Activated B cell treated with CpG ODN at 0.5 μM for 24 hours (primary cell): ENCODE measurements at regions of chr14 and their contacts with region 1.

Region 1: DNA sequence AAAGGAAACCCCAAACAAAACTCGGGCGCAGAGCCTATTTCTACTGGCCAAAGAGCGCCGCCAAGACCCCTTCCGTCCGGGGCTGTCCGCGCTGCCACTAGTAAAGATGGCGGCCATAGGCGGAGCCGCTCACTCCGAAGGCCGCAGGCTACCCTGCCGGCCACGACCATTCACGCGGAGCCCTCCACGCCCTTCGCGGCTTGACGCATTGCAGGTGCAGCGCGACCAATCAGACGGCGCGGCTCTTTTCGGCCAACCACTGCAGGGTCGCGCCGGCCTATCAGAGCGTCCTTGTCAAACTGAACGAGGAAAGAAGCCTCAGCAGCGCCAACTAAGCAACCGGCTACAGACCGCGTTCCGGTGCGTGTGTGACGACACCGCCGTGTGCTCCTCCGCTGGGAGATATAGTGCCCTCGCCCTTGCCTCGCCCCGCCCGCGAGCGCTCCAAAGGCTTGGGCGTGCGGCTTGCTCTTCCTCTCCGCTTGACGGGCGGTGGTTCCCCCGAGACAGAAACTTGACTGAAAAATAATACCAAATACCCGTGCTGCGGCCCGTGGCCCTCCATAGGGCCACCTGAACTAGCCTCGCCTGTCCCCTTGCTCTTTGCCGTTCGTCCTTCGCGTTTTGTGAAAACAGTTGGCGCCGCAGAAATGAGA is 13.6 kb upstream of the CALM1 start:
- DNase-seq: peak; percentile 94
- ATAC-seq: peak; percentile 87
- H3K4me3 Mint-ChIP-seq: no peak overlapping the region
- H3K27ac Mint-ChIP-seq: no peak overlapping the region
- H3K4me1 Mint-ChIP-seq: no peaks in the 10 kb centered on the region
- H3K27me3 Mint-ChIP-seq: no peaks in the 10 kb centered on the region
- CTCF ChIP-seq: no peak

Region 2: GRCh38 chr14:88792572-88793258 is 1590.5 kb before region 1 on chr14 and contains the start of gene EML5:
- CTCF ChIA-PET with region 1: no interaction called
- POLR2A ChIA-PET with region 1: no interaction called
- intact Hi-C with region 1: loop called (anchors 1 kb)
- DNase-seq: peak; percentile 81
- ATAC-seq: peak; percentile 86
- H3K4me3 Mint-ChIP-seq: peak within 1 kb of the TSS; percentile 89
- H3K27ac Mint-ChIP-seq: peak within 1 kb of the TSS; percentile 71
- H3K4me1 Mint-ChIP-seq: peaks cover 24% of the 10 kb centered on the region
- H3K27me3 Mint-ChIP-seq: no peaks in the 10 kb centered on the region
- CTCF ChIP-seq: no peak
- total RNA-seq, gene EML5: 3.8 and 5.0 TPM in 2 replicates

Region 3: DNA sequence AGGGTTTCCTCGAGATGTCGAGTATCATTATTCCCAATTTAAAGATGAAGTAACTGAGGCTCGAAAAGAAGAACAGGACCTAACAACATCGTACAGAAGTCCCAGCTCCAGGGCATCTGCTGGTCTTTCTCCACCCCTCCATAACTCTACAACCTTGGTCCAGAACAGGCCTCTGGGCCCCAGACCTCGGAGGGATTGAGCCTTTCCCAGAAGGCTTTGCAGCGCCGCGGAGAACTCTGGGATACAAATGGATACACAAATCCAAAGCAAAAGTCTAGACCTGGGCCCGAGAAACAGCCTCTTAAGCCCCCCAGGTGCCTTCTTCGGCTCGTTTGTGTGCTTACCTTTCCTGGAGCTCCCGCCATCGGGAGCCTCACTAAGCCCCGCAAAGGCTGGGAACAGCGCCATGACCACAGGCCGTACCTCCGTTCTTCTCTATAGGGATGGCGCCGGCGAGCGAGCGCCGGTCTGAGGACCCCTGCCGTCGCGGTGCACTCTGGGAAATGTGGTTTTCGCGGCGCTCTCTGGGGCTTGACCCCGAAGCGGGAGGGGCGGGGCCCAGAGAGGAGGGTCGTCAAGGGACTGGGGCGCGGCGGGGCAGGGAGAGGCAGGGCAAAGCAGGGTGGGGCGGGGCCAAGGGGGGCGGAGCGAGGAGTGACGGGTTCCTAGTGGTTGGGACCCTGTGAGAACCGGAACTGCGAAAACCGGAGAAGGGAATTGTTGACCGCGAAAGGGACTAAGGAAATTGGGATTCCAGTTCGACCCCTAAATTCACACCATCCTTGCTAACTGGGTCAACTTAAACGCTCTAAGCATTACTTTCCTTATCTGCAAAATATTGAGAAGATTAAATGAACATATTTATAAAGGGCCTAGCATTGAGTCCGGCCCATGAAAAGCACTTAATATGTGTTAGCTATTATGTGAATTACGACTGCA is 51.4 kb before region 1 on chr14 and contains the start of gene NRDE2:
- CTCF ChIA-PET with region 1: interaction called, 3 read pairs
- POLR2A ChIA-PET with region 1: interaction called, 48 read pairs
- intact Hi-C with region 1: loop called (anchors 1 kb)
- DNase-seq: peak; percentile 95
- ATAC-seq: peak; percentile 98
- H3K4me3 Mint-ChIP-seq: peak within 1 kb of the TSS; percentile 93
- H3K27ac Mint-ChIP-seq: peak within 1 kb of the TSS; percentile 95
- H3K4me1 Mint-ChIP-seq: peaks cover 25% of the 10 kb centered on the region
- H3K27me3 Mint-ChIP-seq: peaks cover 19% of the 10 kb centered on the region
- CTCF ChIP-seq: no peak
- total RNA-seq, gene NRDE2: 35.3 and 37.1 TPM in 2 replicates

Region 4: GRCh38 chr14:90406384-90406798 is 23.2 kb after region 1 on chr14:
- CTCF ChIA-PET with region 1: interaction called, 4 read pairs
- POLR2A ChIA-PET with region 1: interaction called, 492 read pairs
- intact Hi-C with region 1: no loop called
- DNase-seq: no peak
- ATAC-seq: no peak
- H3K4me3 Mint-ChIP-seq: no peak overlapping the region
- H3K27ac Mint-ChIP-seq: peak overlapping the region; percentile 3
- H3K4me1 Mint-ChIP-seq: peaks cover 13% of the 10 kb centered on the region
- H3K27me3 Mint-ChIP-seq: no peaks in the 10 kb centered on the region
- CTCF ChIP-seq: no peak

Region 5: GRCh38 chr14:90428676-90429075 is 45.5 kb after region 1 on chr14:
- CTCF ChIA-PET with region 1: no interaction called
- POLR2A ChIA-PET with region 1: no interaction called
- intact Hi-C with region 1: no loop called
- DNase-seq: no peak
- ATAC-seq: peak; percentile 25
- H3K4me3 Mint-ChIP-seq: no peak overlapping the region
- H3K27ac Mint-ChIP-seq: no peak overlapping the region
- H3K4me1 Mint-ChIP-seq: peaks cover 4% of the 10 kb centered on the region
- H3K27me3 Mint-ChIP-seq: peaks cover 8% of the 10 kb centered on the region
- CTCF ChIP-seq: no peak

Region 6: DNA sequence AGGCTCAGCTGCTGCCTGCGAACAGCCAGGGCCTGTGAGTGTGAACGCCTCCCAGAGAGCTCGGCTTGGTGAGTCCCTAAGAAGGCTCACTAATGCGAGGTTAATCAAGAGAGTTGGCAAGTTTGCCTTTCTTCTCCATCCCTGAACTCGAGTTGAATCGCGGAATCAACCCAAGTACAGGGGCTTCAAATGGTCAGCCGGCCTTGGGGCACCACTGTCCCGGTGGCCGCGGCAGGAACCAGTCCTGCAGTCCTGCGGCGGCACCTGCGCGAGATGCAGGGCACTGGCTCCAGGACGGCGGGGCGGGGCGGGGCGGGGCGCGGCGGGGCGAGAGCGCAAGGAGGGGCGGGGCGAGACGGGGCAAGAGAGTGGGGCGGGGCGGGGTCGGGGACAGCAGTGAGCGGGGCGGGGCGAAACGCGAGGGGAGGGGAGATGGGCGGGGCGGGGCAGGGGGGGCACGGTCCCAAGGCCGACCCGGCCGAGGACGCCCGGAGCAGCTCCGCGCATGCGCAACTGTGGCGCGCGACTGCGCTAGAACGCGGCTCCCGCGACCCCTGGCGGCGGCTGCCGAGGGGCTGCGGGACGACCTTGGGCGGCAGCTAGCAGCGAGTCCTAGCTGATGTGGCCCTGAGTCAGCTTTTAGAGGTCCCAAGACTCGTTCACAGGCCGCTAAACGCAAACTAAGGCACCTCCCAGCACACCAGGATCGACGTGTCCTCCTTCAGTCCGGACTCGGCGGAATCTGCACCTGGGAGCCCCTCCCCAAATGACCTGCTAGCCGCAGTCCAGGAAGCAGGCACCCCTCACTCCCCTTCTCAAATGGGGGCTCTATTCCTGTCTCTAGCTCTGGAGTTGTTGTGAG is 375.1 kb after region 1 on chr14:
- CTCF ChIA-PET with region 1: no interaction called
- POLR2A ChIA-PET with region 1: interaction called, 26 read pairs
- intact Hi-C with region 1: loop called (anchors 1 kb)
- DNase-seq: peak; percentile 95
- ATAC-seq: peak; percentile 88
- H3K4me3 Mint-ChIP-seq: peak overlapping the region; percentile 79
- H3K27ac Mint-ChIP-seq: peak overlapping the region; percentile 86
- H3K4me1 Mint-ChIP-seq: peaks cover 24% of the 10 kb centered on the region
- H3K27me3 Mint-ChIP-seq: peaks cover 2% of the 10 kb centered on the region
- CTCF ChIP-seq: no peak

Region 7: DNA sequence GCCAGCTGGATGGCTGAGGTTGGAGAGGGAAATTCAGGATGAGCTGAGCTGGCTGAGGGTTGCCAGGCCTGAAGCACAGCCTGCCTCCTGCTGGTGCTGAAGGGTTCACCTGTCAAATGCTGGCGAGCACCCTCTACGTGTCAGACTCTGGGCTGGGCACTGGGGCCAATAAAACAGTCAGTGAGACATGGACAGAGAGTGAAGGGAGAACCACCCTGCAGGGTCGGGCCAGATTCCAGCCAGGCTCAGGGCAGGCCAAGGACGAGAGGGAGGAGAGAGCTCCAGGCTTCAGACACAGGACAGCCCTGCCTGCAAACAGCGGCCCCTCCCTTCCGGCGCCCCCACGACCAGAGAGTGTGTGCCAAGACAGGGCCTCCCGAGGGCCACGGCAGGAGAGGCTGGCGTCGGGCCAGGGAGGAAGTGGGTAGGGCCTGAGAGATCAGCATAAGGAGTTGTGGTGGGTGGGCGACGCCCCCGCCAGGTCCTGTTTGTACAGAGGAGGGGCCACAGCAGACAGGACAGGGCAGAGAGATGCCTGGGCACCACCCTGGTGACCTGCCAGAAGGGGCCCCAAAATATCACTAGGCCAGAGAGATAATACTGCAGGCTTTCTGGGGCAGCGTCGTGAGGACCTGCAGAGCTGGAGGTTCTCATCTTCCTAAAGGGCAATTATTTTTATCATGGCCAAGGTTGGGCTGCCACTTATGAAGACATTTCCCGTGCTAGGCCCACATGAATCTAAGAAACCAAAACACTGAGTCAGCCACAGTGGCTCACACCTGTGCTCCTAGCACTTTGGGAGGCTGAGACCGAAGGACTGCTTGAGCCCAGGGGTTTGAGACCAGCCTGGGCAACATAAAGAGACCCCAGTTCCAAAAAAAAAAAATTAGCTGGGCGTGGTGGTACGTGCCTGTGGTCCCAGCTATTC is 934.4 kb after region 1 on chr14:
- CTCF ChIA-PET with region 1: no interaction called
- POLR2A ChIA-PET with region 1: interaction called, 13 read pairs
- intact Hi-C with region 1: no loop called
- DNase-seq: peak; percentile 62
- ATAC-seq: peak; percentile 32
- H3K4me3 Mint-ChIP-seq: peak overlapping the region; percentile 70
- H3K27ac Mint-ChIP-seq: peak overlapping the region; percentile 98
- H3K4me1 Mint-ChIP-seq: peaks cover 78% of the 10 kb centered on the region
- H3K27me3 Mint-ChIP-seq: no peaks in the 10 kb centered on the region
- CTCF ChIP-seq: no peak

Region 8: GRCh38 chr14:92121670-92122350 is 1738.6 kb after region 1 on chr14 and contains the starts of genes CPSF2 and NDUFB1:
- CTCF ChIA-PET with region 1: no interaction called
- POLR2A ChIA-PET with region 1: interaction called, 8 read pairs
- intact Hi-C with region 1: loop called (anchors 5 kb)
- DNase-seq: peak; percentile 78
- ATAC-seq: peak; percentile 92
- H3K4me3 Mint-ChIP-seq: peak within 1 kb of the TSS; percentile 100
- H3K27ac Mint-ChIP-seq: peak within 1 kb of the TSS; percentile 100
- H3K4me1 Mint-ChIP-seq: peaks cover 35% of the 10 kb centered on the region
- H3K27me3 Mint-ChIP-seq: no peaks in the 10 kb centered on the region
- CTCF ChIP-seq: no peak
- total RNA-seq, gene CPSF2: 46.9 and 53.2 TPM in 2 replicates
- total RNA-seq, gene NDUFB1: 88.2 and 94.2 TPM in 2 replicates